PC-9 (cell line): ENCODE measurements at regions of chr1 and their contacts with region 1.

Region 1: DNA sequence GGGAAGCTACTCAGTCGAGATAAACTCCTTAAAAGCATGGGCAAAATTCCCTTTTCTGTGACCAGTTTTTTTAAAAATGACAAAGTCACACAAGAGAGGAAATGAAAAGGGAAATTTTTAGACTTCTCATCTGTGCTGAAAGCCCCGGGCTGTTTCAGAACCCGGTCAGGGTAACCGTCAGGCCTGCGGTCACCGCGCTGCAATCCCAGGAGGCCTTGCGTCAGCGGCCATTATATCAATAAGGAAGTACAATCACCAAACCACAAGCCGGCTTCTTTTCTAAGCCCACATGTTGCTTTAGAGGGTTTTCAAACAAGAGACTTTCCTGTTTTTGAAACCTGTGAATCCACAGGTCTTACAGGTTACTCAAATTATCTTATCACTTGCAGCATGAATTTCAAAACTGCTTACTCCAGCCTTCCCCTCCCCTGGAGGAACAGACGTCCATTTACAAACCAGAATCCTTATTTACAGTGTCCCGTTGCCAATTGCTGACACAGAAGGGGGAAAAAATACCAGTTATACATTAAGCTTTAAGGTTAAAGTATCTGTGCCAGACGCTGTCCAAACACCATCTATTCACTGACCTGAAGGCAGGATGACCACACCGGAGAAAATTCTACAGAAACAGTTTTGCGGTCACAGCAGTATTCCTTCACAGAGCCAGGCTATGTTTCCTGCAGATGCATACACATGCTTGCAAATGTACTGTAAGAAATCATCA is 165.3 kb downstream of the TOMM20 start:
- DNase-seq: peak; percentile 90 to 99
- H3K4me3 ChIP-seq: peak overlapping the region; percentile 38
- H3K27ac ChIP-seq: peak overlapping the region; percentile 99
- H3K4me1 ChIP-seq: peaks cover 84% of the 10 kb centered on the region
- H3K27me3 ChIP-seq: no peaks in the 10 kb centered on the region
- CTCF ChIP-seq: no peak

Region 2: DNA sequence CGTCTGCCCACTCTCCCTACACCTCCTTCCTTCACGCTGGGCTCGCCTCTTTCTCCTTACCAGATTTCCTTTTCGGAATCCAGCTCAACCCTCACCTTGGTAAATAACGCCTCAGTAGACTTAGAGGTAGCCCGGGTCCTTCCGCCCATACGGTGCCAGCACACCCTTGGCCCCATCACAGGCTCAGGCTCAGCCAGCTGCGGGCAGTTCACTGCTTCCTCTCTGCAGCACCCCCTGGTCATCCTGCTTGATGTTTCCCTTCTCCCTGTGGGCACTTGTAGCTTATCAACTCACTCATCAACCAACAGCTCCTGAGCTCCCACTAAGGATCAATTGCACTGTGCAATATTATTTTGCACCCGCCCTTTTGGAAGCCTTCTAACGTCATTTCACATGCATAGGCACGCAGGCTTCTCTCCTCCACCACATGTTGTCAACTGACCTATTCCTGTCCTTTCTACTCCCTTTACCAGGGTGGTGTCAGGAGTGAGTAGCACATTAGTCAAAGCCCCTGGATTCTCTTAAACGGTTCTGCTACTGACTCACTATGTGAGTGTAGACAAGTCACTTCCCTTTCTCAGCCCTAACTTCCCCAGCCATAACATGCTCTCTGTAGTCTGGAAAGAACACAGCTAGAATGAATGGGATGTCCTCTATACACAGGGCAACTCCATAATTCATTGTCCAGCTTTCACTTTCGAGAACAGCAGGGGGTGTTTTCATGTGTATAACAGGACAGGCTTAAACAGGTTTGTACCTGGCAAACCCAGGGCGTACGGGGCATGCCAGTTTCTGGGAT is 306.3 kb before region 1 on chr1:
- CTCF ChIA-PET with region 1: no interaction called
- POLR2A ChIA-PET with region 1: no interaction called
- intact Hi-C with region 1: loop called (anchors 2 kb)
- DNase-seq: peak; percentile 50 to 95
- H3K4me3 ChIP-seq: peak overlapping the region; percentile 69
- H3K27ac ChIP-seq: peak overlapping the region; percentile 99
- H3K4me1 ChIP-seq: peaks cover 59% of the 10 kb centered on the region
- H3K27me3 ChIP-seq: no peaks in the 10 kb centered on the region
- CTCF ChIP-seq: no peak

Region 3: DNA sequence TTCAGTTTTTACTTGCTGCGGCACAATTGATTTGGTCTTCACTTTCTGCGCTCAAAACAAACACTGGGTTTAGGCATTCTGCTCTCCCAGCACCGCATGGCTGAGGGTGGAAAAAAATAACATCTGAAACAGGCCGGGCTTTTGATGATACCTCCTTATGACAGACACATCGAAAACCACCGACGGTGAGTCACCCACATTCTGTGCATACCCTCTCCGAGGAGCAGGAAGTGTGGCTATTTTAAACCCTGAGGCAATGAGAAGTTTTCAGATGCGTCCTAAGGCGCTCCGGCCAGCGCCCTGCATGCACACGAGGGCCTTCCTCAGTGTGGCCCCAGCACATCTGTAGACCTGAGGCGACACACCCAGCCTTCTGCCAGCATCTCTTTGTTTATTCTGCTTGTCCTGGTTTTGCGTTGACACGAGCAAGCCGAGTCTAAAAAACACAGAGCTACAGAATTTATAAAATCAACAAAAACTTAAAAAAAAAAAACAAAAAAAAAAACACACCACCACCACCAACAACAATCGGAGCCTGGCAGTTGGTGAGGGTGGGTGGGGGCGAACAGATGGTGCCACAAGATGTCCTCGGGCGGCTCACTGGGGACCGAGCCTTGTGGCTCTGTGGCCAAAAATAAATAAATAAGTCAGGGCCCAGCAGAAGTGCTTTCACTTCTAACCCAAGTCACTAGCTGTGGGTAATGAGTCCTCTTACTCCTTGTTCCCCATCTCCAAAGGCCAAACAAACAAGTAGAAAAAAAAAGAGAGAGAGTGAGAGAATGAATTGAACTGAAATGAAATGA is 190.8 kb before region 1 on chr1:
- CTCF ChIA-PET with region 1: no interaction called
- POLR2A ChIA-PET with region 1: interaction called, 3 read pairs
- intact Hi-C with region 1: loop called (anchors 1 kb)
- DNase-seq: peak; percentile 95 to 99
- H3K4me3 ChIP-seq: peak overlapping the region; percentile 35; the same call in 1 of the 2 replicates
- H3K27ac ChIP-seq: peak overlapping the region; percentile 95
- H3K4me1 ChIP-seq: peaks cover 22% of the 10 kb centered on the region
- H3K27me3 ChIP-seq: no peaks in the 10 kb centered on the region
- CTCF ChIP-seq: no peak

Region 4: GRCh38 chr1:234899041-234899729 is 64.2 kb before region 1 on chr1:
- CTCF ChIA-PET with region 1: no interaction called
- POLR2A ChIA-PET with region 1: no interaction called
- intact Hi-C with region 1: loop called (anchors 1 kb)
- DNase-seq: peak; percentile 82
- H3K4me3 ChIP-seq: no peak overlapping the region
- H3K27ac ChIP-seq: peak overlapping the region; percentile 59
- H3K4me1 ChIP-seq: peaks cover 67% of the 10 kb centered on the region
- H3K27me3 ChIP-seq: no peaks in the 10 kb centered on the region
- CTCF ChIP-seq: no peak

Region 5: DNA sequence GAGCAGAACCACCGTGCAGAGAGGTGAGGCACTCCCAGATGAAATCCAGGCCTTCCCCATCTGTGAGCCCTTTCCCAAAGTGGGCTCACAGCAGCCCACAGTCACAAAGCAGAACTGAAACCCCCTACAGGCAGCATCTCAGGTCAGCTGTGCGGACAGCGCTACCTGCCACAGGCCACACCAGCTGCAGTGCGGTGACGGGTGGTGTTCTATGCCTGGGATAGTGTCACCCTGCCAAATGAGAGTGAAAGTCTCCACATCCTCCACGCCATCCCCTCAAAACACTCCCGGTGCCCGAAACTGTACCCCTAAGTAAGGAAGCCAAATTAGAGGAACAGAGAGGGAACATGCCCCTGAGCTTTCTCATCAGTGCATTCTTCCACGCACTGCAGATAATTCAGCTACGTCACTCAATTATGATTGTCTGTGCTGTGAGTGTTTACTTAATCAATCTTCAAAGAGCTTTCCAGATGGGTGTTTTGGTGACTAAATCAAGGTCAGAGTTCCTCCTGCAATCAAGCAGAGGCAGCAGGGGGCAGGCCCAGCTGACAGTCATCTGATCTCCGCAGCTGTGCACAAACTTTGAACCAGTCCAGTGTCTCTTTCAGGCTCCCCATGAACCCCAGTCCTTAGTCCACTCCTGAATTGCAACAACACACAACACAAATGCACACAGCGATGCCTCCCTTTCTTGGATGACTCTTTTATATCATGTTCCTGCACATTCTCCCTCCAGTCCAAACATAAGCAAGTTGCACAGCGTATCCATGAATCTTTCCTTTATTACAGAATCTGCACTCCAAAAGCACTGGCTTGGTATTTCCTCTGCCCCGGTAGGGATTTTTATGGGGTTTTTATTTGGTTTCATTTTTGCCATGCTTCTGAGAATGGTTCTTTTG is 15.3 kb after region 1 on chr1:
- CTCF ChIA-PET with region 1: interaction called, 3 read pairs
- POLR2A ChIA-PET with region 1: interaction called, 11 read pairs
- intact Hi-C with region 1: loop called (anchors 1 kb)
- DNase-seq: peak; percentile 45 to 93
- H3K4me3 ChIP-seq: peak overlapping the region; percentile 30; the same call in 1 of the 2 replicates
- H3K27ac ChIP-seq: peak overlapping the region; percentile 99
- H3K4me1 ChIP-seq: peaks cover 99% of the 10 kb centered on the region
- H3K27me3 ChIP-seq: no peaks in the 10 kb centered on the region
- CTCF ChIP-seq: no peak

Region 6: GRCh38 chr1:235067263-235068172 is 104.2 kb after region 1 on chr1:
- CTCF ChIA-PET with region 1: no interaction called
- POLR2A ChIA-PET with region 1: interaction called, 4 read pairs
- intact Hi-C with region 1: loop called (anchors 1 kb)
- DNase-seq: peak; percentile 98 to 100
- H3K4me3 ChIP-seq: peak overlapping the region; percentile 39; the same call in 1 of the 2 replicates
- H3K27ac ChIP-seq: peak overlapping the region; percentile 100
- H3K4me1 ChIP-seq: peaks cover 68% of the 10 kb centered on the region
- H3K27me3 ChIP-seq: no peaks in the 10 kb centered on the region
- CTCF ChIP-seq: no peak

Region 7: DNA sequence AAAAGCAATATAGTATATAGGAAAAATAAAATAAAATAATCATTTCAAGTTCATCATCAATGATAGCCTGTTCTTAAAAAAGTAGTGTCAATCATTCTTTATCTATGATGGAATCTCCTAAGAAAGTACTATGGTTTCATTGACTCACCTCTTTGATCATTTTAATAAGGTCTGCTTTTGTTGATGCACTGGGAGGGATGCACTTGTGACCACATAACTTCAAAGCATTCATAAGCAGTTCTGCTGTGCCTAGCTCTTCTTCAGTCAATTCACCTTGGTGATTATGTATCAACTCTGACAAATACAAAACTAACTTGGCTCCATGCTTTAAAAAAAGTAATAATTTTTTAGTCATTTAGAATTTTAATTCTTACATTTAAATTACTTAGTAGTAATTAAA is 771.0 kb after region 1 on chr1:
- CTCF ChIA-PET with region 1: no interaction called
- POLR2A ChIA-PET with region 1: no interaction called
- intact Hi-C with region 1: no loop called
- DNase-seq: no peak
- H3K4me3 ChIP-seq: no peak overlapping the region
- H3K27ac ChIP-seq: no peak overlapping the region
- H3K4me1 ChIP-seq: no peaks in the 10 kb centered on the region
- H3K27me3 ChIP-seq: no peaks in the 10 kb centered on the region
- CTCF ChIP-seq: no peak